T-cell (primary cell): ENCODE measurements at regions of chr14 and their contacts with region 1.

Region 1: DNA sequence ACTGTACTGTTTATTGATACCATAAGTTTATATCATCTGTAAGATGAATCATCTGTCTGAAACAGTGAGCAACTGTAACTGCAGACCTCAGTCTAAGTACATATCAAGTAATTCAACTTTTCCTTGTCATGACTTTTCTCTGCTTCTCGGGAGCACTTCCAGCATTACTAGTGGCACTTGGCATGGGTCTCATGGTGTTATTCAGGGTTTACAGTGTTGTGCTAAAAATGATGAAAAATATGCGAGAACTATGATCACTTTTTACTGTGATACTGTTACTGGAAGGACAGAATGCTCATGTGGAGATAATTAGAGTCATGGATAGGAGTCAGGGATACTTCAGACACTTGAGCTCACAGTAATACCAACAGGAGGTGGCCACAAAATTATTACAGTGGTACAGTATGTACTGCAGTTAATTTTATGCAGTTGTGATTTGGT is 8.3 kb downstream of the KTN1 start:
- DNase-seq: no peak
- ATAC-seq: no peak
- H3K4me3 ChIP-seq: no peak overlapping the region
- H3K4me3 Mint-ChIP-seq: no peak overlapping the region
- H3K27ac ChIP-seq: no peak overlapping the region
- H3K27ac Mint-ChIP-seq: peak overlapping the region in 1 of 2 donors; percentile 12
- H3K4me1 ChIP-seq: peaks cover 4 to 13% of the 10 kb centered on the region in 2 experiments
- H3K4me1 Mint-ChIP-seq: peaks cover 62 to 69% (median 65%) of the 10 kb centered on the region in 3 donors
- H3K27me3 ChIP-seq: no peaks in the 10 kb centered on the region
- H3K27me3 Mint-ChIP-seq: no peaks in the 10 kb centered on the region

Region 2: GRCh38 chr14:55254581-55254980 is 333.7 kb before region 1 on chr14:
- CTCF ChIA-PET with region 1: no interaction called
- POLR2A ChIA-PET with region 1: interaction called in 1 of 2 experiments, 10 read pairs
- DNase-seq: no peak
- ATAC-seq: no peak
- H3K4me3 ChIP-seq: no peak overlapping the region
- H3K4me3 Mint-ChIP-seq: no peak overlapping the region
- H3K27ac ChIP-seq: no peak overlapping the region
- H3K27ac Mint-ChIP-seq: no peak overlapping the region
- H3K4me1 ChIP-seq: no peaks in the 10 kb centered on the region
- H3K4me1 Mint-ChIP-seq: no peaks in the 10 kb centered on the region
- H3K27me3 ChIP-seq: peaks cover 2% of the 10 kb centered on the region in 2 experiments
- H3K27me3 Mint-ChIP-seq: peaks cover 3 to 4% of the 10 kb centered on the region in 2 donors

Region 3: DNA sequence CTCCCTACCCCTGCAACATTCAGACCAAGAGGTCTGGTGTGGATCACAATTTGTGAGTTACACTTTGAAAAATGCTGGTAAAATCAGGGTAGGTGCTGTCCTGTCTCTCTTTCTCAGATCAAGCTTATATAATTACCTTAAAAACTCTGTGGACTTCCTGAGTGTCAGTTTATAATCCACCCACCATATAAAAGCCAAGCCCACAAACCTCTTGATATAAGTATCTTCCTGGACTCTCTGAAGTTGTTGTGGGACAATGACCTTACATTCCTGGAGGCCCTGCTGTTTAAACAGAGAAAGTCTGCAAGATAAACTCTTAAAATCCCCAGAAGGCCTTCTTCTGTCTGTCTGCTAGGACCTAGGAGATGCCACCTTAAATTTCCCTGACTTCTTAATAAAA is 19.7 kb before region 1 on chr14:
- CTCF ChIA-PET with region 1: no interaction called
- POLR2A ChIA-PET with region 1: no interaction called
- DNase-seq: no peak
- ATAC-seq: no peak
- H3K4me3 ChIP-seq: no peak overlapping the region
- H3K4me3 Mint-ChIP-seq: no peak overlapping the region
- H3K27ac ChIP-seq: no peak overlapping the region
- H3K27ac Mint-ChIP-seq: no peak overlapping the region
- H3K4me1 ChIP-seq: no peaks in the 10 kb centered on the region
- H3K4me1 Mint-ChIP-seq: no peaks in the 10 kb centered on the region
- H3K27me3 ChIP-seq: peaks cover 0 to 4% of the 10 kb centered on the region in 2 experiments
- H3K27me3 Mint-ChIP-seq: peaks cover 0 to 2% of the 10 kb centered on the region in 2 donors